ENCODE measurements at regions of chr3 and their contacts with region 1.

Region 1: DNA sequence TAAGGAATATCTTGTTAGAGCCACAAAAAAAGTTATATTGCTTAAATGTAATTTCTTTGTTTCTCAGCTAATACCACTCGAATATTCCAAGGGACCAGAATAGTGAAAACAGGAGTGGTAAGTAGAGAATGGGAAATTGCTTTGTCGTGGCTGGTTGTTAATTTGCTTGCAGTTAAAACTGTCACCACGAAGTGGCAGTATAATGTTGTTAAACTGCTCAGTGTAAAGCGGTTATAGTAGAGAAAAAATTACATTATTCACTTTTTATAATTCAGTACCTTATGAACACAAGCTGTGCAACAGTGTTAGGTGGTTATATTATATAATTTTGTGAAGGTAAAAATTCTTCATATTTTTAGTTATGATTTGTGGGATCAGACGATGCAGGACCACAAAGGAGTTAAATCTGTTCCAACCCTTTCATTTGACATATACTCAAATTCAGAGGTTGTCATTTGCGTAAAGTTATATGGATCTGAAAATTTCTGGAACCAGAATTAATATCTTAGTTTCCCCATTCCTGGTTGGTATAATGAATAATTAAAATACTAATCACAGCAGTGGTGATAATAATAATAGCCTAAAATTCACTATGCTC is 171.8 kb downstream of the FEZF2 start:
- DNase-seq: peak; percentile 9
- H3K4me3 ChIP-seq: no peak overlapping the region
- H3K27ac ChIP-seq: no peak overlapping the region
- H3K4me1 ChIP-seq: no peaks in the 10 kb centered on the region
- H3K27me3 ChIP-seq: no peaks in the 10 kb centered on the region
- CTCF ChIP-seq: peak; percentile 53

Region 2: DNA sequence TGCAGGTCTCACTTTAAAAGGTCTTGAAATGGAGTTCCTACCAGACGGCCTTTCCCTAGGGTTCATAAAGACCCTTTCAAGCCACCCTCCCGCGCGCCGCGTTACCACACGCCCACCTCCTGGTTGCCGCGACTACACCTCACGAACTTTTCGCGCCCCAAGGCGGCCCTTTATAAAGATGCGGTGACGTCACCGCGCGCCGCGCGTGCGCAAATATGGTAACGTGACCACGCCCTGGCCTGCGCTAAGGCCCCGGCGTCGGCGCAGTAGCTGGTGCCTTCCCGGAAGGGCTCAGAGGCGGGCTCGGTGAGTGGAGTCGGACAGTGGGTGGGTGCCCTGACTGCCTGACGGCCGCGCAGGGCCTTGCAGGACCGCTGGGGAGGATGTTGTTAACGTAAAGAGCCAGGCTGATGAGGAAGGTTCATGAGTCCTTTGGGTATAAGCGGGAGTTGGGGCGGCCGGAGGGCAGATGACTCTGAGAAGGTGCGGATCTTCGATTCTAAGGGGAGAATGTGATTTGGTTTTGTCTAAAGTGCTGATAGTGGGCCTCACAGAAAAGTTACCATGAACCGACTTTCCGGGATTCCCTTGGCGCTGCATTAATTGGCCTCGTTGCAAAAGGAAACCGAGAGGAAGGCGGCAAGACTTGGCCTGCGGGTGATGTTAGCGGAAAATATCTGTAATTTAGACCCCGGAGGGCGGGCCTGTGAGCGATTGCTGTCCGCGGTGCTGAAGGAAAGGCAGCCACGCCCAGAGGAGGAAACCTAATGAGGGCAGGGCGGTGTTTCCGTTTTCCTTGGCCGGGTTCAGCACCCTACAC is 117.4 kb after region 1 on chr3:
- CTCF ChIA-PET with region 1: no interaction called
- POLR2A ChIA-PET with region 1: no interaction called
- intact Hi-C with region 1: loop called (anchors 10 kb)
- DNase-seq: peak; percentile 81
- H3K4me3 ChIP-seq: peak overlapping the region; percentile 55
- H3K27ac ChIP-seq: no peak overlapping the region
- H3K4me1 ChIP-seq: no peaks in the 10 kb centered on the region
- H3K27me3 ChIP-seq: no peaks in the 10 kb centered on the region
- CTCF ChIP-seq: no peak

Region 3: DNA sequence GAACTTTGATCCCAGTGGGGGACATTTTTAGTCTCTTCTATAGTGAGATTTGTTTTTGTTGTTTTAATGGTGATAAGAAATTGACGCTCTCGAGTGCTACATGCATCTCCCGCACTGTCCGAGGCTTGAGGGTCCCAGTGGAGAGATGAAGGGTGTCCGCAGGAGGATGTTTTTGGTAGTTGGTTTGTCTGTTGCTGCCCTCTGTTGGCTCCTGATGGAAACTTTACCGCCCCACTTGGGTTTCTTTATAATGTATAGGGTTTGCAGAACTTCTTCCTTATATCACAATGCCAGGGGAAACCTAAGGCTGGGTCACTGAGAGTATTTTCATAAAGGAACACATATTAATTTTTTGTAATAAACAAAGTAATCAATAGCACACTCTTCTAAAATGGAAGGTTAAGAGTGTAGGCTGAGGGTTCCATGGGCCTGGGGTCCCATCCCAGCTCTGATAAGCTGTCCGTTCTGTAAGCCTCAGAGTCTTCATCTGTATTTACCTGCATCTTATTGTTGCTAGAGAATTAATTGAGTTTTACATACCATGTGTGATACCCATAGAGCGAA is 357.1 kb after region 1 on chr3:
- CTCF ChIA-PET with region 1: no interaction called
- POLR2A ChIA-PET with region 1: no interaction called
- intact Hi-C with region 1: loop called (anchors 2 kb)
- DNase-seq: peak; percentile 14
- H3K4me3 ChIP-seq: no peak overlapping the region
- H3K27ac ChIP-seq: no peak overlapping the region
- H3K4me1 ChIP-seq: no peaks in the 10 kb centered on the region
- H3K27me3 ChIP-seq: no peaks in the 10 kb centered on the region
- CTCF ChIP-seq: peak; percentile 51

Region 4: GRCh38 chr3:63051920-63052319 is 850.4 kb after region 1 on chr3:
- CTCF ChIA-PET with region 1: no interaction called
- POLR2A ChIA-PET with region 1: no interaction called
- intact Hi-C with region 1: no loop called
- DNase-seq: peak; percentile 44
- H3K4me3 ChIP-seq: no peak overlapping the region
- H3K27ac ChIP-seq: no peak overlapping the region
- H3K4me1 ChIP-seq: no peaks in the 10 kb centered on the region
- H3K27me3 ChIP-seq: no peaks in the 10 kb centered on the region
- CTCF ChIP-seq: no peak